Mammary epithelial cell (primary cell): ENCODE measurements at regions of chr19 and their contacts with region 1.

Region 1: GRCh38 chr19:3572132-3572854 is 451 bp upstream of the HMG20B start:
- DNase-seq: peak; percentile 100
- H3K4me3 ChIP-seq: peak overlapping the region; percentile 35 to 55 (median 50)
- H3K27ac ChIP-seq: peak overlapping the region; percentile 67
- H3K4me1 ChIP-seq: peaks cover 25% of the 10 kb centered on the region
- H3K27me3 ChIP-seq: no peaks in the 10 kb centered on the region
- CTCF ChIP-seq: no peak

Region 2: DNA sequence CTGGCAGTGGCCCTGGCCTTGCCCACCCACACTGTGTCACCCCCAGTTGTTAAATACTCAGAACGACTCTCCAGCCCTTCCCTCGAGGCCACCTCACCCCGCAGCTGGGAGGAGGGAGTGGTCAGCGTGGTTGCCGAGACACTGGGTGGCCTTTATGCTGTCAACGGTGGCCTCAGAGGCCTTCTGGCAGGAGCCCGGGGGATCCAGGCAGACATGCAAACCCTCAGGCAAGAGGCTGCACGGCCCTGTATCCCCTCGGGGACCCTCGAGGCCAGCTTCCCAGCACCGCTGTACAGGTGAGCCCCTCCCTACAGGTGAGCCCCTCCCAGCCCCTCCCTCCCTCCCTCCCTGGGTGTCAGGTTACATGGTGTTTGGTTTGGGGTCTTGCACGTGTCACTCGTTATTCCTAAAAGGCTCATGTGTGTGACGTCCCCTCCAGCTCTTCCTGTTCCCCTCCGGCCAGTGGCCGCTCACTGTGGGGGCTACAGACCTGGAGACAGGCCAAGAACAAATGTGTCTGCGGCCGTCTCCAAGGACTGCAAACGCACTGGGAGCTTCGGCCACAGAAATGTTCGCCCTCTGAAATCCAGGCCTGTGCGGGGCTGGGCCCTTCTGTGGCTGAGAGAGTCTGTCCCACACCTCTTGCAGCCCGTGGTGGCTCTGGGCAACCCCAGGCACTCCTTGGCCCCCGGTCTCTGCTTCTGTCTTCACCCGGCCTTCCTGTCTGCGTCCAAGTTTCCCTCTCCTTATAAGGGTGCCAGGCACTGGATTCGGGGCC is 33.1 kb before region 1 on chr19 and contains the start of gene TEKTIP1:
- CTCF ChIA-PET with region 1: no interaction called
- dilution Hi-C with region 1: loop called (anchors 5 kb)
- in situ Hi-C with region 1: no loop called
- intact Hi-C with region 1: no loop called
- DNase-seq: no peak
- H3K4me3 ChIP-seq: no peak within 1 kb of the TSS
- H3K27ac ChIP-seq: no peak within 1 kb of the TSS
- H3K4me1 ChIP-seq: peaks cover 7% of the 10 kb centered on the region
- H3K27me3 ChIP-seq: no peaks in the 10 kb centered on the region
- CTCF ChIP-seq: no peak
- total RNA-seq, gene TEKTIP1: 1.9 TPM in 1 of 2 donors, not detected in the other

Region 3: GRCh38 chr19:3544742-3545668 is 27.3 kb before region 1 on chr19:
- CTCF ChIA-PET with region 1: interaction called, 4 read pairs
- dilution Hi-C with region 1: no loop called
- in situ Hi-C with region 1: no loop called
- intact Hi-C with region 1: loop called (anchors 1 kb)
- DNase-seq: peak; percentile 83
- H3K4me3 ChIP-seq: no peak overlapping the region
- H3K27ac ChIP-seq: no peak overlapping the region
- H3K4me1 ChIP-seq: peaks cover 15% of the 10 kb centered on the region
- H3K27me3 ChIP-seq: no peaks in the 10 kb centered on the region
- CTCF ChIP-seq: peak; percentile 94

Region 4: GRCh38 chr19:3557461-3558248 is 14.6 kb before region 1 on chr19 and contains the start of gene MFSD12:
- CTCF ChIA-PET with region 1: no interaction called
- dilution Hi-C with region 1: no loop called
- in situ Hi-C with region 1: no loop called
- intact Hi-C with region 1: loop called (anchors 1 kb)
- DNase-seq: peak; percentile 90
- H3K4me3 ChIP-seq: peak within 1 kb of the TSS; percentile 82 to 93 (median 83)
- H3K27ac ChIP-seq: peak within 1 kb of the TSS; percentile 57
- H3K4me1 ChIP-seq: peaks cover 23% of the 10 kb centered on the region
- H3K27me3 ChIP-seq: no peaks in the 10 kb centered on the region
- CTCF ChIP-seq: no peak
- total RNA-seq, gene MFSD12: 113 to 267 TPM

Region 5: DNA sequence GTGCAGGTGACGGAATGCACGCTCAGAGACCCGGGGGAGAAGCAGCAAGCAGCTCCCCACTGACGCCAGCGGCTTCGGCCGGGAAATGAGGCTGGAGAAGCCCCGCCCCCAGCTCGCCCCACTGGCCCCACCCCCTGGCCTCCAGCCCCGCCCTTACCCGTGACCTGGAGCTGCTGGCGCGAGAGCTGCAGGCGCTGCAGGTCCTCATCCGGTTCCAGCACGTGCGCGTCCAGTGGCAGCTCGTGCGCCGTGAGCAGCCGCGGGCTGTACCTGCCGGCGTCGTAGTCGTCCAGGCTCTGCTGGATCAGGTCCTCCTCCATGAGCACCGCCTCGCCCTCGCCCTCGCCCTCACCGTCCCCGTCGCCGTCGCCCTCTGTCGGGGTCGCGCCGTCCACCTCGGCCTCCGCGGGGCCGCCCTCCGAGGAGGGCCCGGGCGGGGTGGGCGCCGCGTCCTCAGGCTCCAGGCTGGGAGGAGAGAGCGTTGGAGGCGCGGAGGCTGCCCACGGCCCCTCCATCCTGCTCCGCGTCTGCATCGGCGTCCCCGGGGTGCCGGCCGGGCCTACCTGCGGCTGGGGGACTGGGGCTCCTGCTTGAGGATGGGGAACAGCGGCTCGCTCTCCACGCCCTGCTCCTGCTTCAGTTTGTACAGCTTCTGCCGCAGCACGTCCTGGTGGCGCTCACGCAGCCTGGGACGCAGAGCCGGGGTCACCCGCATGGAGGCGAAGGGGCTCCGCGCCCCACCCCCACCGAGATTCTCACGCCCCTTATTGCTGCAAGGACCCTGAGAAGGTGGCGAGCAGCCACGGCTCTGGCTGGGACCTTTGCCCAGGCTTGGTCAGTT is 40.8 kb after region 1 on chr19:
- CTCF ChIA-PET with region 1: no interaction called
- dilution Hi-C with region 1: no loop called
- in situ Hi-C with region 1: no loop called
- intact Hi-C with region 1: no loop called
- DNase-seq: no peak
- H3K4me3 ChIP-seq: no peak overlapping the region
- H3K27ac ChIP-seq: no peak overlapping the region
- H3K4me1 ChIP-seq: no peaks in the 10 kb centered on the region
- H3K27me3 ChIP-seq: no peaks in the 10 kb centered on the region
- CTCF ChIP-seq: no peak

Region 6: DNA sequence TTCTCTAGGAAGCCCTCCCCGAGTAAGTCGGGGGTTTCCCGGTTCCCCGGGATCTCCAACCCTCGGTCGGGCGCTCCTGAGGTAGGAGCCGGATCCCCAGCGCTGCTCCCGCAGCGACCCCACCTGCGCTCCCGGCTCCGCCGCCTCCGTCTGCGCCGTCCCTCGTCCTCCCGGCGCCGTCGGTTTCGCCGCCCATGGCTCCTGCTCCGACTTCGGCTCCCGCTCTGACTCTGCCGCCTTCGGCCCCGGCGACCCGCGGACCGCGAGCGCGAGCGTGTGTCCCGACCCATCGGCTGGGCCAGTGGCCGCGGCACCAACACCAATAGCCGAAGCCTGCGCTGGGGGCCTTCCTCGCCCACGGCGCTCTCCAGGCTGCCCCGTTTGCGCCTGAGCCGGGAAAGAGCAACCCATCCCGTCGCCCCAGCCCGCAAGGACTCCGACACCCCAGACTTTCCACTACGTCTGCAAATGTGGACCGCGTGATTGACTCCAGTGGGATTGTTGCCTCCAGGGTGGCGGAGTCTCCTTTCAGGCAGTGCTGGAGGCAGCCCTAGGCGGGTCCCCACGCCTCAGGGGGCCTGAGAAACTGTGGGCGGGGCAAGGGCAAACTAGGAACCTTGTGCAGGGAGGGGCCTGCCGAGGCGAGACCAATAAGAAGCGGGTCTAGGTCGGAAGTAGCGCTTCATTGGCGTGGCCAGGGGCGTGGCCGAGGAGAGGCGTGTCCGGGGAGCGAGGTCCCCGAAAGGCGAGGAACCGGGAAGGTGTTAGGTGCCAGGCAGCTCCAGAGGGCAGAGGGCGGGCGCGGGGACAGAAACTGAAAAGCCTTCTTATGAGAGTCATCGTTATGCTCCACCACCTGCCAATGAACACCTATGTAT is 54.4 kb after region 1 on chr19 and contains the start of gene CACTIN:
- CTCF ChIA-PET with region 1: no interaction called
- dilution Hi-C with region 1: loop called (anchors 5 kb)
- in situ Hi-C with region 1: no loop called
- intact Hi-C with region 1: loop called (anchors 2 kb)
- DNase-seq: peak; percentile 96
- H3K4me3 ChIP-seq: peak within 1 kb of the TSS; percentile 69 to 98 (median 91)
- H3K27ac ChIP-seq: peak within 1 kb of the TSS; percentile 75
- H3K4me1 ChIP-seq: peaks cover 13% of the 10 kb centered on the region
- H3K27me3 ChIP-seq: no peaks in the 10 kb centered on the region
- CTCF ChIP-seq: no peak
- total RNA-seq, gene CACTIN: 16.0 to 26.5 TPM

Region 7: GRCh38 chr19:3653865-3654513 is 81.7 kb after region 1 on chr19:
- CTCF ChIA-PET with region 1: no interaction called
- dilution Hi-C with region 1: loop called (anchors 5 kb)
- in situ Hi-C with region 1: no loop called
- intact Hi-C with region 1: no loop called
- DNase-seq: no peak
- H3K4me3 ChIP-seq: no peak overlapping the region
- H3K27ac ChIP-seq: no peak overlapping the region
- H3K4me1 ChIP-seq: peaks cover 13% of the 10 kb centered on the region
- H3K27me3 ChIP-seq: no peaks in the 10 kb centered on the region
- CTCF ChIP-seq: no peak